AG04450 (cell line): ENCODE measurements at regions of chr3 and their contacts with region 1.

Region 1: DNA sequence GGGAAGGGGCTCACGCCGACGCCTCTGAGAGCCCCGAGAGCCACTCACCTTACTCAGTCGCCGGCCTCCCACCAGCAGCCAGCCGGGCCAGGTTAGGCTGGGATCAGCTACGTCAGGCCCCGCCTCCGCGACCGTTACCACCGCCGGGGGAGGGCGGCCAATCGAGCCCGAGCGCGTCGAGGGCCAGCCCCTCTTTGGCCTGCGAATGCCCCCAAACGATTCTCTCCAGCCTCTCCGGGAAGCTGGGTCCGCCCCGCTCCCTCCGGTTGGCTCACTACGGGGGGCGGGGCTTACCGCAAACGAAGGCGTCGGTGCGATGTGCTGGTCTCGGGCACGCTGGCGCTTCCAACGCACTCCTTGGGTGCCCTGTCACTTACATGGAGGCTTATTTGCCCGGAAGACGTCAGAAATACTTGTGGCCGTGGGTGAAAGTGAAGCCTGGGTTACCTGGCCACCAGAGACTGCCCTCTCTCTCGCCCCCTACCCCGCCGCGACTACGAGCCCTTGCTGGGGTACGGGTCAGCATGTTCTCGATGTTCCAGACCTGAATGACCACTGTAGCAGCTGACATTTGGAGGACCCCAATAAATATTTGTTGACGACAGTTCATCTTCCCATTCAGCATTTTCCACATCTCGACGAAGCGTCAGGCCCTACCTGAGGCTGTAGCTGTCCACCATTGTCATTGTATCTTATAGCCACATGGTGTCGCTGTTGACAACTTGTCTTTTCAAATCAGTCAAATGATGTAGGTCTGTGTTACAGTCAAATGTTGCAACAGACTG is at the start of gene CEP70:
- DNase-seq: peak; percentile 85
- H3K4me3 ChIP-seq: peak within 1 kb of the TSS; percentile 98
- H3K27ac ChIP-seq: peak within 1 kb of the TSS; percentile 75
- H3K27me3 ChIP-seq: no peaks in the 10 kb centered on the region
- CTCF ChIP-seq: peak; percentile 80
- polyA plus RNA-seq, gene CEP70: 9.8 and 14.6 TPM in 2 replicates

Region 2: DNA sequence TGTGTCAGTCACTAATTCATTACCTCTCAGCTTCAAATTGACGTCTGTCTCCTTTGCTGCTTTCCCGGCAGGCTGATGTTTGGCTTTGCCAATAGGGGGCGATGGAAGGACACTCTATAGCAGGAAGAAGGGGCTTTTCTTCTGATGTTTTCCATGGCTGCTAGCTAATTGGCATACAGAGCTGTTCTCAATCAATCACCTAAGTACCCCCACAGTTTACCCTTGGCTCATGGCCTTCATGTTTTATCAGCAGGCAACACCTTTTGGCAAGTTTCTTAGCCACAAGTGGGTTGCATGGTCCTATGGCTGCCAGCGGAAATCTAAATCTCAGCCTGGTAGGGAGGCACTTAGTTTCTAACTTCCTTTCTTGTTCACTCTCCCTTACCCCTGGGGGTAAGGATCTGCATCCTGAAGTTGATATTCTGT is 114.9 kb before region 1 on chr3:
- CTCF ChIA-PET with region 1: interaction called, 25 read pairs
- POLR2A ChIA-PET with region 1: no interaction called
- DNase-seq: no peak
- H3K4me3 ChIP-seq: no peak overlapping the region
- H3K27ac ChIP-seq: no peak overlapping the region
- H3K27me3 ChIP-seq: no peaks in the 10 kb centered on the region
- CTCF ChIP-seq: peak; percentile 95

Region 3: DNA sequence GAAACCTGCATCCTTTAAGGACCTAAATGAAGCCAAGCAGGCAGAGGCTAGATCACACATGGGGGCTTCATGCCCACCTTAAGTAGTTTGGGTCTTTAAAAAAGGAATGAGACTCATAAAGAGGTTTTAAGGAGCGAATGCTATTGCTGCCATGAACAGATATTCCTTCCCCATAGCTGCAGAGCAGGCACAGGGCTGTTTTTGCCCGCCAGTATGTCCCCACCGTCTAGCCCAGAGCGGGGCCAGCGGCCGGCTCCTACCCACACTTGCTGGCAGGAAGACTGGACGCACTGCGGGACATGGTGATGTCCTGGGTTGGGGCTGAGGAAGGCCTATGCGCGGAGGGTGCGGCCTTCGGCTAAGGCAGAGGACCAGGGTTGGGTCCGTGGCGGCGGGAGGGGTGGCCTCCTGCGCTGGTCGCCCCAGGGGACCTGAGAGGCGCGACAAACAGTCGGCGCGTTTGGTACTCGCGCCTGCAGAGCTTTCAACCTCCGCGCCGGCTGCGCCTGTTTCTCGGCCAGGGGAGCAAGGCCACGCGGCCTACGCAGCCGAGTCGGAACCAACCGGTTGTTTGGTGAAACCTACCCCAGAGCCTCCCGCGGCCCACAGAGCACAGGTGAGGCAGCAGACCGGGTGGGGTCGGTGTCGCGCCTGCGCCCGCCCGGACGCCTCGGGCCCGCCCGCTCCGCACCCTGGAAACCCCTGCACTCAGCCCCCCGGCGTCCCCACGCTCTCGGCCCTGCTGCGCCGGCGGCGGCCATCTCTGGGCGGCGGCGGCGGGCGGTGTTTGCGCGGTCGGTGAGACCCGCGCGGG is 14.2 kb after region 1 on chr3 and contains the start of gene FAIM:
- CTCF ChIA-PET with region 1: interaction called, 12 read pairs
- POLR2A ChIA-PET with region 1: interaction called, 10 read pairs
- DNase-seq: peak; percentile 18
- H3K4me3 ChIP-seq: peak within 1 kb of the TSS; percentile 65
- H3K27ac ChIP-seq: peak within 1 kb of the TSS; percentile 70
- H3K27me3 ChIP-seq: no peaks in the 10 kb centered on the region
- CTCF ChIP-seq: no peak
- polyA plus RNA-seq, gene FAIM: 4.5 and 5.7 TPM in 2 replicates

Region 4: DNA sequence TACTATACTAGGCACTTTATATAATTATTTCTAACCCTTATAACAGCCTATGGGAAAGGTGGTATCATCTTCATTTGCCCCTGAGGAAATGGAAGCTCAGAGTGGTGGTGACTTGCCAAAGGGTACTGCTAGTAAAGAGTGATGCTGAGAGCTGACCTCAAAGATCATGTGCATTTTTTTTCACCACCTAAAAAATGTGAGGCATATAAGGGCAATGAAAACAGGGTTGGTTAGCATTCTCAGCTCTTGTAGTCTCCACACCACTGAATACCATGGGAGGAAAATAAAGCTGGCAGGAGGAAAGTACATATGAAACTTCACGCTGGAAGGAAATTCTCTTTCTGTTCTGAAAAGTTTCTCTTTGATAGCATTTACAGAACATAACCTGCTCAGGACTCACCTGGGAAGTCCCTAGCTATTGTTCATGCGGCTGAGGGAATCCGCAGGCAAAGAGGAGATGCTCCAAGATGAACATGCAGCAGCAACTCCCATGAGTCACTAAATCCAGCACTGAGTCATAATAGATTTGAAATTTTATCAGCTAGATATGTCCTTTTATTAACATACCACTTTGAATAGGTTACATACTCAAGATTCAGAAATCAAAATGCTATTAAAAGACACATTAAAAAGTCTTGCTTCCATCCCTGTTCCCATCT is 31.5 kb after region 1 on chr3:
- CTCF ChIA-PET with region 1: interaction called, 14 read pairs
- POLR2A ChIA-PET with region 1: no interaction called
- DNase-seq: peak; percentile 8
- H3K4me3 ChIP-seq: no peak overlapping the region
- H3K27ac ChIP-seq: no peak overlapping the region
- H3K27me3 ChIP-seq: no peaks in the 10 kb centered on the region
- CTCF ChIP-seq: no peak

Region 5: GRCh38 chr3:138694287-138695007 is 100.1 kb after region 1 on chr3:
- CTCF ChIA-PET with region 1: interaction called, 11 read pairs
- POLR2A ChIA-PET with region 1: interaction called, 6 read pairs
- DNase-seq: peak; percentile 91
- H3K4me3 ChIP-seq: no peak overlapping the region
- H3K27ac ChIP-seq: peak overlapping the region; percentile 87
- H3K27me3 ChIP-seq: no peaks in the 10 kb centered on the region
- CTCF ChIP-seq: no peak

Region 6: GRCh38 chr3:138740072-138740471 is 145.7 kb after region 1 on chr3:
- CTCF ChIA-PET with region 1: no interaction called
- POLR2A ChIA-PET with region 1: interaction called, 14 read pairs
- DNase-seq: no peak
- H3K4me3 ChIP-seq: no peak overlapping the region
- H3K27ac ChIP-seq: no peak overlapping the region
- H3K27me3 ChIP-seq: no peaks in the 10 kb centered on the region
- CTCF ChIP-seq: no peak

Region 7: GRCh38 chr3:138898301-138898700 is 304.0 kb after region 1 on chr3:
- CTCF ChIA-PET with region 1: interaction called, 14 read pairs
- POLR2A ChIA-PET with region 1: no interaction called
- DNase-seq: no peak
- H3K4me3 ChIP-seq: no peak overlapping the region
- H3K27ac ChIP-seq: no peak overlapping the region
- H3K27me3 ChIP-seq: no peaks in the 10 kb centered on the region
- CTCF ChIP-seq: no peak